B cell (primary cell): ENCODE measurements at regions of chr6 and their contacts with region 1.

Region 1: GRCh38 chr6:130872250-130873095 is 45.3 kb downstream of the SMLR1 start:
- DNase-seq: peak; percentile 72
- ATAC-seq: peak; percentile 43
- H3K4me3 ChIP-seq: no peak overlapping the region
- H3K4me3 Mint-ChIP-seq: no peak overlapping the region
- H3K27ac ChIP-seq: no peak overlapping the region
- H3K27ac Mint-ChIP-seq: no peak overlapping the region
- H3K4me1 ChIP-seq: no peaks in the 10 kb centered on the region
- H3K4me1 Mint-ChIP-seq: no peaks in the 10 kb centered on the region
- H3K27me3 ChIP-seq: no peaks in the 10 kb centered on the region
- H3K27me3 Mint-ChIP-seq: no peaks in the 10 kb centered on the region
- CTCF ChIP-seq: peak; percentile 98

Region 2: GRCh38 chr6:130851026-130851425 is 21.4 kb before region 1 on chr6:
- CTCF ChIA-PET with region 1: interaction called, 11 read pairs
- POLR2A ChIA-PET with region 1: no interaction called
- intact Hi-C with region 1: no loop called
- DNase-seq: no peak
- ATAC-seq: no peak
- H3K4me3 ChIP-seq: no peak overlapping the region
- H3K4me3 Mint-ChIP-seq: no peak overlapping the region
- H3K27ac ChIP-seq: no peak overlapping the region
- H3K27ac Mint-ChIP-seq: no peak overlapping the region
- H3K4me1 ChIP-seq: peaks cover 17 to 26% of the 10 kb centered on the region in 2 donors
- H3K4me1 Mint-ChIP-seq: peaks cover 39% of the 10 kb centered on the region
- H3K27me3 ChIP-seq: no peaks in the 10 kb centered on the region
- H3K27me3 Mint-ChIP-seq: no peaks in the 10 kb centered on the region
- CTCF ChIP-seq: no peak